Activated T-helper 2 cell treated with anti-CD3 and anti-CD28 coated beads, Interferon-gamma antibody, Interleukin-2, Interleukin-4, amounts not matched to agents 10 μg/mL and 5 μg/mL and 100 μg/mL, durations not matched to agents 14 hours and 24 hours and 36 hours (primary cell): ENCODE measurements at regions of chr14 and their contacts with region 1.

Region 1: DNA sequence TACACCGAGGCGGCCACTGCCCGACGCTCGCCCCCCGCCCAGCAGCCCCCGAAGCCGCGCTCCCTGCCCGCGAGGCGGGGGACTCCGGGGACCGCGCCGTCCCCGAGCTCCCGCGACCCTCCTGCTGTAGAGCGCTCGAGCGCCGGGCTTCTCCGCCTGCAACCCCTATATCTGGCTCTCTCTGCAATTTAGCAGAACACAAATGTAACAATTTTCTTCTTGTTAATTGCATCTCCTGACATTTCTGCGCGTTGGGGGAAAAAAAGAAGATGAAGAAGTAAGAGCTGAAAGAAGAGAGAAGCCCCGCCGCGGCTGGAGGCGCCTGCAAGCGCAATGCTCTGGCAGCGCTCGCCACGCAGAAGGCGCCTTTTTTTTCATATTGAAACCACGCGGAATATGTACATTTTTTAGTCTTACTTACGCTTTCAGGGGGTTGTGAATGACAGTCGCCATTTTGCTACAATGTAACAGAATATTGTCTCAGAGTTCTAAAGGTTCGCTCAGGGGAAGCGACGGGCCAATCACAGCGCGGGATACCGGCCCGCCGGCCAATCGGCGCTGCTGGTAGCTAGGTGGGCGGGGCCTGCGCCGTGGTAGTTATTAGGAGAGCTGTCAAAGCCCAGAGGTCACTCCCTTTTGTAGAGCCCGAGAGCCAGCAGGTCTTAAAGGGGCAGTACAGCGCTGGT is at the start of gene DPF3:
- DNase-seq: peak; percentile 91
- H3K4me3 Mint-ChIP-seq: peak within 1 kb of the TSS; percentile 89
- H3K27ac Mint-ChIP-seq: no peak within 1 kb of the TSS
- H3K4me1 Mint-ChIP-seq: peaks cover 24% of the 10 kb centered on the region
- H3K27me3 Mint-ChIP-seq: peaks cover 70% of the 10 kb centered on the region
- total RNA-seq, gene DPF3: 0.62 and 0.66 TPM in 2 replicates

Region 2: GRCh38 chr14:71942904-71943694 is 950.7 kb before region 1 on chr14:
- intact Hi-C with region 1: no loop called
- DNase-seq: no peak
- H3K4me3 Mint-ChIP-seq: no peak overlapping the region
- H3K27ac Mint-ChIP-seq: no peak overlapping the region
- H3K4me1 Mint-ChIP-seq: no peaks in the 10 kb centered on the region
- H3K27me3 Mint-ChIP-seq: peaks cover 21% of the 10 kb centered on the region

Region 3: GRCh38 chr14:72443991-72444441 is 449.8 kb before region 1 on chr14:
- intact Hi-C with region 1: loop called (anchors 10 kb)
- DNase-seq: peak; percentile 31
- H3K4me3 Mint-ChIP-seq: no peak overlapping the region
- H3K27ac Mint-ChIP-seq: peak overlapping the region; percentile 23
- H3K4me1 Mint-ChIP-seq: peaks cover 62% of the 10 kb centered on the region
- H3K27me3 Mint-ChIP-seq: no peaks in the 10 kb centered on the region

Region 4: GRCh38 chr14:72926292-72927028 is 32.7 kb after region 1 on chr14 and contains the start of gene DCAF4:
- intact Hi-C with region 1: loop called (anchors 1 kb)
- DNase-seq: peak; percentile 94
- H3K4me3 Mint-ChIP-seq: peak within 1 kb of the TSS; percentile 92
- H3K27ac Mint-ChIP-seq: peak within 1 kb of the TSS; percentile 92
- H3K4me1 Mint-ChIP-seq: peaks cover 6% of the 10 kb centered on the region
- H3K27me3 Mint-ChIP-seq: peaks cover 20% of the 10 kb centered on the region
- total RNA-seq, gene DCAF4: 13.2 and 17.6 TPM in 2 replicates